Esophagus muscularis mucosa (tissue), 4 donors: ENCODE measurements at regions of chr10 and their contacts with region 1.

Region 1: GRCh38 chr10:73743905-73744663 is at the start of gene SEC24C:
- DNase-seq: peak; percentile 99
- H3K4me3 ChIP-seq: peak within 1 kb of the TSS; percentile 78 to 96 (median 92)
- H3K27ac ChIP-seq: peak within 1 kb of the TSS; percentile 88 to 90 (median 89)
- H3K4me1 ChIP-seq: peaks cover 36 to 64% (median 48%) of the 10 kb centered on the region in 4 donors
- H3K27me3 ChIP-seq: no peaks in the 10 kb centered on the region
- CTCF ChIP-seq: no peak
- EP300 ChIP-seq: no peak
- POLR2A ChIP-seq: peak; percentile 6
- total RNA-seq, gene SEC24C: 42.4 to 61.3 (median 53.5) TPM

Region 2: DNA sequence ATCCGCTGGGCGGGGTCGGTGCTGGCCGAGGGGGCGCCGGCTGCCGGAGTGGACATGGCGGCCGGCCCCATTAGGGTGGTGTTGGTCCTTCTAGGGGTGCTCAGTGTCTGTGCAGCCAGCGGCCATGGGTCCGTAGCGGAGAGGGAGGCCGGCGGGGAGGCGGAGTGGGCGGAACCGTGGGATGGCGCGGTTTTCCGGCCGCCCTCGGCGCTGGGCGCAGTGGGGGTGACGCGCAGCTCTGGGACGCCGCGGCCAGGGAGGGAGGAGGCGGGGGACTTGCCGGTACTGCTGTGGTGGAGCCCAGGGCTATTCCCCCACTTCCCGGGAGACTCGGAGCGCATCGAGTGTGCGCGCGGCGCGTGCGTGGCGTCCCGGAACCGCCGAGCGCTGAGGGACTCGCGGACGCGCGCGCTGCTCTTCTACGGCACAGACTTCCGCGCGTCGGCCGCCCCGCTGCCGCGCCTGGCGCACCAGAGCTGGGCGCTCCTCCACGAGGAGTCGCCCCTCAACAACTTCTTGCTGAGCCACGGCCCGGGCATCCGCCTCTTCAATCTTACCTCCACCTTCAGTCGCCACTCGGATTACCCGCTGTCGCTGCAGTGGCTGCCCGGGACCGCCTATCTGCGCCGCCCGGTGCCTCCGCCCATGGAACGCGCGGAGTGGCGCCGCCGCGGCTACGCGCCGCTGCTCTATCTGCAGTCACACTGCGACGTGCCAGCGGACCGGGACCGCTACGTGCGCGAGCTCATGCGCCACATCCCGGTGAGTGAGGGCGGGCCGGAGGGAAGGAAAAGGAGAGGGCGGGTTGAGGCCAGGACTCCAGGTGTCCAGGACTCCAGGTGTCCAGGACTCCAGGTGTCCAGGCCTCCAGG is 28.4 kb after region 1 on chr10:
- intact Hi-C with region 1: loop called (anchors 2 kb)
- DNase-seq: peak; percentile 93
- H3K4me3 ChIP-seq: peak overlapping the region; percentile 71 to 95 (median 82)
- H3K27ac ChIP-seq: peak overlapping the region; percentile 92 to 98 (median 96)
- H3K4me1 ChIP-seq: peaks cover 29 to 37% (median 35%) of the 10 kb centered on the region in 4 donors
- H3K27me3 ChIP-seq: no peaks in the 10 kb centered on the region
- CTCF ChIP-seq: peak in 2 of 3 experiments; percentile 12 to 19
- EP300 ChIP-seq: no peak
- POLR2A ChIP-seq: peak; percentile 88

Region 3: GRCh38 chr10:73785221-73785720 is 41.2 kb after region 1 on chr10 and contains the start of gene ZSWIM8:
- intact Hi-C with region 1: loop called (anchors 5 kb)
- DNase-seq: peak; percentile 96
- H3K4me3 ChIP-seq: peak within 1 kb of the TSS; percentile 80 to 97 (median 90)
- H3K27ac ChIP-seq: peak within 1 kb of the TSS; percentile 92 to 96 (median 94)
- H3K4me1 ChIP-seq: peaks cover 57 to 78% (median 65%) of the 10 kb centered on the region in 4 donors
- H3K27me3 ChIP-seq: no peaks in the 10 kb centered on the region
- CTCF ChIP-seq: peak in 1 of 3 experiments; percentile 15
- EP300 ChIP-seq: no peak
- POLR2A ChIP-seq: peak; percentile 72
- total RNA-seq, gene ZSWIM8: 66.4 to 123 (median 107) TPM

Region 4: GRCh38 chr10:73850863-73851461 is 106.9 kb after region 1 on chr10:
- intact Hi-C with region 1: no loop called
- DNase-seq: peak; percentile 93
- H3K4me3 ChIP-seq: peak overlapping the region; percentile 2 to 20 (median 8)
- H3K27ac ChIP-seq: peak overlapping the region; percentile 86 to 93 (median 92)
- H3K4me1 ChIP-seq: peaks cover 22 to 79% (median 74%) of the 10 kb centered on the region in 4 donors
- H3K27me3 ChIP-seq: no peaks in the 10 kb centered on the region
- CTCF ChIP-seq: no peak
- EP300 ChIP-seq: no peak
- POLR2A ChIP-seq: no peak